MCF 10A (cell line): ENCODE measurements at regions of chr13 and their contacts with region 1.

Region 1: GRCh38 chr13:94362411-94362909 is 117.0 kb downstream of the DCT start:
- DNase-seq: peak; percentile 87
- H3K4me3 Mint-ChIP-seq: no peak overlapping the region
- H3K27ac Mint-ChIP-seq: no peak overlapping the region
- H3K4me1 Mint-ChIP-seq: no peaks in the 10 kb centered on the region
- H3K27me3 Mint-ChIP-seq: no peaks in the 10 kb centered on the region
- CTCF ChIP-seq: peak; percentile 61

Region 2: GRCh38 chr13:92716749-92717148 is 1645.7 kb before region 1 on chr13:
- CTCF ChIA-PET with region 1: interaction called, 5 read pairs
- POLR2A ChIA-PET with region 1: no interaction called
- intact Hi-C with region 1: loop called (anchors 1 kb)
- DNase-seq: peak; percentile 40
- H3K4me3 Mint-ChIP-seq: no peak overlapping the region
- H3K27ac Mint-ChIP-seq: no peak overlapping the region
- H3K4me1 Mint-ChIP-seq: no peaks in the 10 kb centered on the region
- H3K27me3 Mint-ChIP-seq: no peaks in the 10 kb centered on the region
- CTCF ChIP-seq: peak; percentile 38

Region 3: DNA sequence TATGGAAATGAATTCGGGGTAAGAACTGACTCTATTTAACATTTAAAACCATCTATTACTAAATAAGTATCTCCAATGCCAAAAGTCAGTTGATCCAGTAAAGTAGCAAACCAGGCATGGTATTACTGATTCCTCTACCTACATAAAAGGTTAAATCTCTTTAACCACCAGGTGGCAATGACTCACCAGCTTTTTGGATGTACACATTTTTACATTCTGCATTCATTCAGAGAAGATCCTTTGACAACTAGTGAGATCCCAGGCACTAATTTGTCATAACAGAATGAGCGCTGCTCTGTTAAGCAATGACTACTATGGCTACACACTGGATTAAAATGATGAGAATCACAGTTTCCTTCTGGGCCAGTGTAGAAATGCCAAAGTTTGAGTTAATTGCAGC is 1465.6 kb before region 1 on chr13:
- CTCF ChIA-PET with region 1: interaction called, 8 read pairs
- POLR2A ChIA-PET with region 1: interaction called, 3 read pairs
- intact Hi-C with region 1: loop called (anchors 2 kb)
- DNase-seq: peak; percentile 64
- H3K4me3 Mint-ChIP-seq: no peak overlapping the region
- H3K27ac Mint-ChIP-seq: no peak overlapping the region
- H3K4me1 Mint-ChIP-seq: peaks cover 13% of the 10 kb centered on the region
- H3K27me3 Mint-ChIP-seq: no peaks in the 10 kb centered on the region
- CTCF ChIP-seq: peak; percentile 28

Region 4: GRCh38 chr13:92967923-92968322 is 1394.5 kb before region 1 on chr13:
- CTCF ChIA-PET with region 1: interaction called, 14 read pairs
- POLR2A ChIA-PET with region 1: no interaction called
- intact Hi-C with region 1: no loop called
- DNase-seq: peak; percentile 53
- H3K4me3 Mint-ChIP-seq: no peak overlapping the region
- H3K27ac Mint-ChIP-seq: no peak overlapping the region
- H3K4me1 Mint-ChIP-seq: no peaks in the 10 kb centered on the region
- H3K27me3 Mint-ChIP-seq: no peaks in the 10 kb centered on the region
- CTCF ChIP-seq: peak; percentile 39

Region 5: DNA sequence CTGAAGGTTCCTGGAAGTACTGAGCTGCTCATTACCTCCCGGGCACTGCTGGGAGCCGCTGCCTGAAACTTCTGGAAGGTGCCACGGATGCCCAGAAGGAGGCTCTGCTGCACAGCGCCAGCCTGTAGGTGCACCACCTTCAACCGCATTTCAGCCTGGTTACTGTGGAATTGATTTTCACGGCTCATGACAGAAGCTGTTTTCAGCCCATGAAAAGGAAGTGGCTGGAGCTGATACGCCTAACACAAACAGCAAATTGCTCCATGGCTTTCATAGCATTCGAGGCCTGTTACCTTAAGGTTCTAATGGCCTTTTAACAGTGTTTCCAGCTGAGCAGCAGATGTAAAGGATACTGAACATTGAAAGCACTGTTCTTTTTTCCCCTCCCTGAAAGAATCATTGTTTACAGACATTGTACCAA is 1113.8 kb before region 1 on chr13:
- CTCF ChIA-PET with region 1: interaction called, 4 read pairs
- POLR2A ChIA-PET with region 1: no interaction called
- intact Hi-C with region 1: loop called (anchors 5 kb)
- DNase-seq: peak; percentile 53
- H3K4me3 Mint-ChIP-seq: no peak overlapping the region
- H3K27ac Mint-ChIP-seq: peak overlapping the region; percentile 97
- H3K4me1 Mint-ChIP-seq: peaks cover 37% of the 10 kb centered on the region
- H3K27me3 Mint-ChIP-seq: no peaks in the 10 kb centered on the region
- CTCF ChIP-seq: peak; percentile 24

Region 6: GRCh38 chr13:94345374-94346195 is 16.9 kb before region 1 on chr13:
- CTCF ChIA-PET with region 1: interaction called, 32 read pairs
- POLR2A ChIA-PET with region 1: interaction called, 4 read pairs
- intact Hi-C with region 1: no loop called
- DNase-seq: peak; percentile 74
- H3K4me3 Mint-ChIP-seq: no peak overlapping the region
- H3K27ac Mint-ChIP-seq: peak overlapping the region; percentile 88
- H3K4me1 Mint-ChIP-seq: peaks cover 14% of the 10 kb centered on the region
- H3K27me3 Mint-ChIP-seq: no peaks in the 10 kb centered on the region
- CTCF ChIP-seq: peak; percentile 21

Region 7: DNA sequence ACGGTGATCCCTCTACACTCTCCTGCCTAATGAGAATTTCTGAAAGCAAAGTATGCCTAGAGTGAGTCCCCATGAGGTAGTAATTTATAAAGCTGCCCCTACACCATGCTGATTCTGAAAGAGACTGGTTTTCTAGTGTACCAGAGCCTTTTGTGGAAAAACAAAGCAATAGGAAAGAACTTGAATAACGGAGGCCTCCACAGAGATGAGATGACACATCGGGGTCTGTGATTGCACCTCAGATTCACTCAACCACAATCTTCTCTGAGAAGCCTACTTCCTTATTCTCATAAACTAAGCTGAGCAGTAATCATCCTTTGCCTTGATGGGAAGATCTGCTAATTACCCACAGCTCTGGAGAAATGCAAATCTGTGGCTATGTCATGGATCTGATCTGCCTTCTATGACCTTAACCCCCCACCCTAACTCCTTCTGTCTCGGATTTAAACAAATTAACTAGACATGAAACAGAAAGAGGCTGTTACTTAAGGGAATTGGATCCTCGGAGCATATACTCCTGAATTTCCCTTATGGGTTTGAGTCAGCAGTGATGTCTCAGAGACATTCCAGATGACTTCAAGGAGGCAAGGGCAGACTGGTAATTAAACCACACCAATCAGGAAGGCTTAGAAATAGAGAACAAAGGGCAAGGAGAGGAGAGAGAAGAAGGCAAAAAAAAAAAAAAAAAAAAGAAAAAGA is 11.0 kb before region 1 on chr13:
- CTCF ChIA-PET with region 1: interaction called, 32 read pairs
- POLR2A ChIA-PET with region 1: interaction called, 4 read pairs
- intact Hi-C with region 1: no loop called
- DNase-seq: no peak
- H3K4me3 Mint-ChIP-seq: no peak overlapping the region
- H3K27ac Mint-ChIP-seq: no peak overlapping the region
- H3K4me1 Mint-ChIP-seq: no peaks in the 10 kb centered on the region
- H3K27me3 Mint-ChIP-seq: no peaks in the 10 kb centered on the region
- CTCF ChIP-seq: no peak